OCI-LY7 (cell line): ENCODE measurements at regions of chr2 and their contacts with region 1.

Region 1: DNA sequence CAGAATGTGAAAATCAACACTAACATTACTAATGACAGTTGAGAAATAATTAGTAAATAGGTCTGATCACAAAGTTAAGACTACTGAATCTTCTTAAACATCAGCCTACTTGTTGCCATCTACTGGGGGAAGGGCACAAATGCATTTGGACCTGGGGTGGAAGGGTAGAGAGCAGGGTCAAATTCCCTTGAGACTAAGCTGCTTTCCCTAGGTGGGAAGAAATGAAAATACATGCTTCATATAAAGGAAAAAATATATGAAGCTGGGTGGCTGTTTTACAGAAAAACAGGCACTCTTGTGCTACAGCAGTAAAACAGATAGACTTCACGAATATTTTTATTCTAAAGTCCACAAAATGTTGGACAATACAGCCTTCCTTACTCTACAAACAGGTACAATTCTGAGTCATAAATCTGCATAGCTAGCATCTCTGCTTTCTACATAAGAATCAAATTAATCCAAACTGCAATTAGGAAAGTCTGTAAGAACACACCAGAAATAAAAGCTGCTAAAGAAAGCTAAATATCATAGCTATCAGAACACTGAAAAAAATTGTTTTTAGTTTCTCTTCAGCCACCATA is 10.9 kb downstream of the TRIP12 start:
- DNase-seq: peak; percentile 64
- H3K4me3 ChIP-seq: no peak overlapping the region
- H3K27ac ChIP-seq: no peak overlapping the region
- H3K4me1 ChIP-seq: peaks cover 31% of the 10 kb centered on the region
- CTCF ChIP-seq: peak; percentile 79

Region 2: GRCh38 chr2:229627728-229628127 is 283.2 kb before region 1 on chr2:
- CTCF ChIA-PET with region 1: no interaction called
- POLR2A ChIA-PET with region 1: no interaction called
- intact Hi-C with region 1: no loop called
- DNase-seq: no peak
- H3K4me3 ChIP-seq: no peak overlapping the region
- H3K27ac ChIP-seq: no peak overlapping the region
- H3K4me1 ChIP-seq: no peaks in the 10 kb centered on the region
- CTCF ChIP-seq: no peak

Region 3: GRCh38 chr2:229800997-229801754 is 109.7 kb before region 1 on chr2:
- CTCF ChIA-PET with region 1: no interaction called
- POLR2A ChIA-PET with region 1: no interaction called
- intact Hi-C with region 1: loop called (anchors 2 kb)
- DNase-seq: peak; percentile 72
- H3K4me3 ChIP-seq: no peak overlapping the region
- H3K27ac ChIP-seq: no peak overlapping the region
- H3K4me1 ChIP-seq: no peaks in the 10 kb centered on the region
- CTCF ChIP-seq: peak; percentile 91

Region 4: GRCh38 chr2:229921892-229922445 is 11.0 kb after region 1 on chr2 and contains the start of gene TRIP12:
- CTCF ChIA-PET with region 1: no interaction called
- POLR2A ChIA-PET with region 1: interaction called, 10 read pairs
- intact Hi-C with region 1: no loop called
- DNase-seq: peak; percentile 95
- H3K4me3 ChIP-seq: peak within 1 kb of the TSS; percentile 95
- H3K27ac ChIP-seq: peak within 1 kb of the TSS; percentile 85
- H3K4me1 ChIP-seq: peaks cover 19% of the 10 kb centered on the region
- CTCF ChIP-seq: no peak
- total RNA-seq, gene TRIP12: 80.0 and 94.0 TPM in 2 replicates